ENCODE measurements at regions of chr7 and their contacts with region 1.

Region 1: DNA sequence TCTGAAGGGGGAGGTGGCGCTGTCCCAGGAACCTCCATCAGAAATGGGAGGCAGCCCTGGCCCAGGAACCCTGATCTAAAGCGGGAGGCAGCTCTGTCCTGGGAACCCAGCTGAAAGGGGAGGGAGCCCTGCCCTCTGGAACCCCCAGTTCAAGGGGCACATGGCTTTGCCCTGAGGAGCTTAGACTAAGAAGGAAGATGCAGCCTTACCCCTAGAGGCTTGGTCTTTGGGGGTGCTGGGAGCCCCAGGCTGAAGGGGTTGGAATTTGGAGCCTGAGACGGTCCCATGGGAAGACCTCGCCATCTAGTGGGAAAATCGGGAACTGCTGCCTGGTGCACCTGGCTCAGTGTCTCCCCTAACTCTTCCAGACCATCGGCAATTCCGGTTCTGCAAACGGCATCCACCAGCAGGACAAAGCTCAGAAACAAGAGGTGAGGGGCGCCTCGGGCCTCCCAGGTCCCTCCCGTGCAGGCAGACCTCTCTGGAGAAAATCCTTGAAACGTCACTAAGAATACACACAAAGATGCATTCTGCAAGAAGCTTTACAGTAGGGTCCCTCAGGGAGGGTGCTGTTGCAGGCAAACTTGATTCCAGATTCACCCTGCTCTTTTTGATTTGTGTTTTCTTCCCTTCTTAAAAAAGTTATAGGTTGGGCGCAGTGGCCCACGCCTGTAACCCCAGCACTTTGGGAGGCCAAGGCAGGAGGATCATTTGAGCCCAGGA is 52.4 kb upstream of the GTF2IRD1 start:
- DNase-seq: peak; percentile 65
- H3K4me3 ChIP-seq: no peak overlapping the region
- H3K27ac ChIP-seq: no peak overlapping the region
- H3K4me1 ChIP-seq: no peaks in the 10 kb centered on the region
- H3K27me3 ChIP-seq: no peaks in the 10 kb centered on the region

Region 2: GRCh38 chr7:74061840-74062539 is 339.3 kb before region 1 on chr7:
- in situ Hi-C with region 1: loop called (anchors 10 kb)
- DNase-seq: peak; percentile 97
- H3K4me3 ChIP-seq: peak overlapping the region; percentile 72
- H3K27ac ChIP-seq: peak overlapping the region; percentile 96
- H3K4me1 ChIP-seq: peaks cover 8% of the 10 kb centered on the region; the same call in 1 of the 2 replicates
- H3K27me3 ChIP-seq: no peaks in the 10 kb centered on the region

Region 3: DNA sequence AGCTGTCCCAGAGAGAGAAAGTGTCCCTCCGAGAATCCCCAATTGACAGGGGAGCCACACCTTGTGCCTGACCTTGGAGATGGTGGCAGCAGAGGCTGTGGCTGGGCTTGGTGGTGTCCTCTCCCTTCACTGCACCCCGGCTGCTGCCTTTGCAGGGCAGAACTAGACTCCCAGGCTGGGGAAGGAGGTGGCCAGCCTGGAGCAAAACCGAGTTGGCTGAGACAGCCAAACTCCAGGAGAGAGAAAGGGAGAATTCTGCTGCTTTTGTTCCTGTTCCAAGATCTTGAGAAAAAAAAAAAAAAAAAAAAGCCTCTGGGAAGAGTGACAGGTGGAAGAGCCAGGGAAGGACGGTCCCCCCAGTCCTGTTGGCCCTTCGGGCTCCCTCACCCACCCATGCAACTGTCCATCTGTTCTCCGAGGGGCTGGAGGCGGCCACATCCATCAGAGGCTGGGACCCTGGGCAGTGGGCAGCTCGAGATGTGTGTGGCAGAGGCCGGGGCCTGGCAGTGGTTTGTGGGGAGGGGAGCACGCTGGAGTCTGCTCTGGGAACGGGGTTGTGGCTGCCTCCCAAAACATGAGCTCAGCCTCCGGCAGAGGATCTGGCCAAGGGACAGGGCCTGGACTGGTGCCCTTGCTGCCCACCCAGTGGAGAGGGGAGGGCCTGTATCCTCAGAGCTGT is 76.6 kb before region 1 on chr7:
- in situ Hi-C with region 1: no loop called
- DNase-seq: no peak
- H3K4me3 ChIP-seq: no peak overlapping the region
- H3K27ac ChIP-seq: no peak overlapping the region
- H3K4me1 ChIP-seq: no peaks in the 10 kb centered on the region
- H3K27me3 ChIP-seq: no peaks in the 10 kb centered on the region